H1 (cell line): ENCODE measurements at regions of chr6 and their contacts with region 1.

Region 1: GRCh38 chr6:134097114-134097707 is 44.8 kb upstream of the SLC2A12 start:
- DNase-seq: peak in 1 of 2 experiments; percentile 71
- H3K4me3 ChIP-seq: no peak overlapping the region
- H3K27ac ChIP-seq: no peak overlapping the region
- H3K4me1 ChIP-seq: no peaks in the 10 kb centered on the region
- H3K27me3 ChIP-seq: peaks cover 0 to under 1% (median 0%) of the 10 kb centered on the region in 4 experiments; a peak in 1 of 7 replicates
- CTCF ChIP-seq: peak in 2 of 3 experiments; percentile 63 to 69; a peak in 3 of 4 replicates
- EP300 ChIP-seq: no peak
- POLR2A ChIP-seq: no peak
- RAD21 ChIP-seq: peak; percentile 96 to 98

Region 2: DNA sequence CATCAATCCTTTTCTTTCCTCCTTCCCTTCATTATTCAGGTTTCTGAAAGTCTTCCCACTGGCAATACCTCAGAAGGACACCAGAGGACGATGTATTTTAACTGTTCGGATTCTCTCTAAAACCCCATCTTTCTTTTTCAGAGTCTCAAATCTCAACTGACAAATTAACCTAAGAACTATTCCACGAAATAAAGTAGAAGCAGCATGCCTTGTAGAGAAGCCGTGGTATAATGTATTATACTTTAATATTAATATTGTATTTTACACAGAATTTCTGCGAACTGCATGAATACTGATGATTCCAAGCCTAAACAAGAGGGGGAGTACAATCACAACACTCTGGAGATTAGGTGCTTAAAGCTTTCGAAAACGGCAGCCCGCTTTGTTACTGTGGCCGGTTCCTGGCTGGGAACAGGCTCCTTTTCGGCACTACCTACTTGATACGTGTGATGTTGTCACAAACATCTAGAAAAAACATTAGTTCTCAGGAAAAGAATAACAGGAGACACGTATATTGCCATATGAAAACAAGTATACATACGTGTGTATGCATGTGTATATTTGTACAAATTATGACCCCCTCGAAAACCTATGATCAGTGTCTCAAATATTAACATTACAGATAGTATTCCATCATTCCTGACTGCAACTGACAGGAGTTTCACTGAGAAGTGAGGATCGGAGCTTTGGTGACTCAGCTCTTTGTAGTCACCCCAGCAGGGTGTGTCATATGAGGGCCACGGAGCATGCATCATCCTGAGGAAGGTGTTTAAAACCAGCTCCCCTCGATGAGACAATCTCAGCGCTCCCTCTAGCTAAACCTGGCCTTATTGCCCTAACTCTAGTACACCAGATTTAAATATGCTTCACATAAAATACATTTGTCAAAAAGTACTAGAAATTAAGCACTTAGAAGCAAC is 528.0 kb before region 1 on chr6:
- CTCF ChIA-PET with region 1: interaction called, 16 read pairs
- POLR2A ChIA-PET with region 1: no interaction called
- DNase-seq: no peak
- H3K4me3 ChIP-seq: peak overlapping the region; percentile 3 to 56 (median 24); a peak in 6 of 8 replicates
- H3K27ac ChIP-seq: no peak overlapping the region
- H3K4me1 ChIP-seq: no peaks in the 10 kb centered on the region
- H3K27me3 ChIP-seq: no peaks in the 10 kb centered on the region
- CTCF ChIP-seq: peak in 2 of 3 experiments; percentile 58 to 66; a peak in 2 of 4 replicates
- EP300 ChIP-seq: no peak
- POLR2A ChIP-seq: no peak
- RAD21 ChIP-seq: peak; percentile 76 to 78

Region 3: GRCh38 chr6:133945158-133945557 is 152.1 kb before region 1 on chr6:
- CTCF ChIA-PET with region 1: interaction called, 12 read pairs
- POLR2A ChIA-PET with region 1: no interaction called
- DNase-seq: no peak
- H3K4me3 ChIP-seq: no peak overlapping the region
- H3K27ac ChIP-seq: no peak overlapping the region
- H3K4me1 ChIP-seq: no peaks in the 10 kb centered on the region; a peak in 1 of 7 replicates
- H3K27me3 ChIP-seq: no peaks in the 10 kb centered on the region
- CTCF ChIP-seq: peak in 2 of 3 experiments; percentile 15 to 23; a peak in 2 of 4 replicates
- EP300 ChIP-seq: no peak
- POLR2A ChIP-seq: no peak
- RAD21 ChIP-seq: no peak

Region 4: DNA sequence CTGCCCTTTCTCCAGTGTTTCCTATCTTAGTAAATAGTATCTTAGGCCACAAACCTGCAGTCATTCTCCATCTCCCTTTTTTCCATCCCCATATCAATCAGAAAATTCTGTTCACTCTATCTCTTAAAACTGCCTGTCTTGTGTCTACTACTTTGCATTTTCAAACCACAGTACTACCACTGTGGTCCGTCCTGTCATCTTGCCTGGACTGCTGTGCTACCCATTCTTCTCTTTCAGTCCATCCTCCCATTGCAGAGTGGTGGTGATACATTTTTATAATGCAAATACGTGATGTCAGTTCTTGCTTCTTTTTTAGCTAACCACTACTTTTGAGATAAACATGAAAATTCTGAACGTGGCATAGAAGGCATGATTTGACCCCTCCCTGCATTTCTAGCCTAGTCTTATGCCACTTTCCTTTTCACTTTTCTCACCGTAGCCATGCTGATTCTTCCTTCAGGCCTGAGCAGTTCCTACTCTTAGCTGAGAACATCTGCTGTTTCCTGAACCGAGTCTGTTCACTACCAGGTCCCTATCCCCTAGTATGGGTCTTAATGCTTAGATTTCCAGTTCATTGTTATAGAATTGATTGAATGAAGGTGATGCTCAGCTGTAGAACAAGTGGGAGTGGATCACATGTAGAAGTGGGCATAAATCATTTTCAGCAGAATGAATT is 130.4 kb before region 1 on chr6:
- CTCF ChIA-PET with region 1: interaction called, 20 read pairs
- POLR2A ChIA-PET with region 1: no interaction called
- DNase-seq: no peak
- H3K4me3 ChIP-seq: no peak overlapping the region
- H3K27ac ChIP-seq: no peak overlapping the region
- H3K4me1 ChIP-seq: peaks cover 0 to 3% (median 1%) of the 10 kb centered on the region in 4 experiments; a peak in 2 of 7 replicates
- H3K27me3 ChIP-seq: no peaks in the 10 kb centered on the region
- CTCF ChIP-seq: no peak
- EP300 ChIP-seq: no peak
- POLR2A ChIP-seq: no peak
- RAD21 ChIP-seq: no peak

Region 5: DNA sequence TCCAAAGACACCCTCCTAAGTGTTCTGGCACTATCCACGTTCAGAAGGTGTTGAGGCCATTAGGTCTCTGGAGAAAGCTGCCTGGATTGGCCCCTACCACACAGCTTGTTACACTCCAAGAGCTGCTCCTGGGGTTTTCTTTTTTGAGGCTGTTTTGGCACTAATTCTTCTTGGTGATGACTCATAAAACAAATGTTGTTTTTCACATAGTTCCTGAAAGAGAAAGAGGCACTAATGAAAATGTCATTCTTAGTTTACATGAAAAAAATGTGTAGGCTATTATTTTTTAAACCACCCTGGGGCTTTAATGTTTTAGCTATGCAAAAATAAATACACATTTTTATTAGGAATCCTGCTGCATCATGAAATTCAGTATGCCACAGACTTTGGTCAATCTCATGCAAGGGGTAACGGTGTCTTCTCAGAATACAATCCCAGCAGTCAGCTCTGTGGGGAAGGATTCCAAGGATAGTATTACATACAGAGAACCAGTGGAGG is 106.1 kb before region 1 on chr6:
- CTCF ChIA-PET with region 1: interaction called, 14 read pairs
- POLR2A ChIA-PET with region 1: no interaction called
- DNase-seq: no peak
- H3K4me3 ChIP-seq: no peak overlapping the region
- H3K27ac ChIP-seq: no peak overlapping the region
- H3K4me1 ChIP-seq: peaks cover 0 to 6% (median 3%) of the 10 kb centered on the region in 4 experiments; a peak in 2 of 7 replicates
- H3K27me3 ChIP-seq: no peaks in the 10 kb centered on the region
- CTCF ChIP-seq: no peak
- EP300 ChIP-seq: no peak
- POLR2A ChIP-seq: no peak
- RAD21 ChIP-seq: no peak

Region 6: DNA sequence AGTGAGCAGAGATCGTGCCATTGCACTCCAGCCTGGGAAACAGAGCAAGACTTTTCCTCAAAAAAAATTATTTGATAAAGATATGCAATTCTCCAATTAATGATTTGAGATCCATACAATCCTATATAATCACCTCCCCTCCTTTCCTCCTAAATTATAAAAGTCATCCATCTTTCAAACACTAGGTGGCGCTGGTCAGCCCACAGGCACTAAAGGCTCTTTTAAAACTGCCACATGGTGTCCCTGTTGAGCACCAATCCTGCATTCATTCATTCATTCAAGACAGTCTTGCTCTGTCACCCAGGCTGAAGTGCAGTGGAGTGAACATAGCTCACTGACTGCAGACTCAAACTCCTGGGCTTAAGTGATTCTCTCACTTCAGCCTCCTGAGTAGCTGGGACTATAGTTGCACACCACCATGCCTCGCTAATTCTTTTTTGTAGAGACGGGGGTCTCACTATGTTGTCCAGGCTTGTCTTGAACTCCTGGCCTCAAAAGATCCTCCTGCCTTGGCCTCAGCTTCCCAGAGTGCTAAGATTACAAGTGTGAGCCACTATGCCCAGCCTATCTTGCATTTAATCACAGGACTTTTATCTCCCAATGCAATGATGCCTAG is 14.0 kb after region 1 on chr6:
- CTCF ChIA-PET with region 1: interaction called, 55 read pairs
- POLR2A ChIA-PET with region 1: no interaction called
- DNase-seq: no peak
- H3K4me3 ChIP-seq: no peak overlapping the region
- H3K27ac ChIP-seq: no peak overlapping the region
- H3K4me1 ChIP-seq: no peaks in the 10 kb centered on the region
- H3K27me3 ChIP-seq: no peaks in the 10 kb centered on the region
- CTCF ChIP-seq: peak; percentile 59 to 100 (median 96)
- EP300 ChIP-seq: no peak
- POLR2A ChIP-seq: no peak
- RAD21 ChIP-seq: peak; percentile 60 to 69

Region 7: GRCh38 chr6:135212020-135212806 is 1115.0 kb after region 1 on chr6:
- CTCF ChIA-PET with region 1: no interaction called
- POLR2A ChIA-PET with region 1: no interaction called
- DNase-seq: no peak
- H3K4me3 ChIP-seq: no peak overlapping the region
- H3K27ac ChIP-seq: no peak overlapping the region
- H3K4me1 ChIP-seq: peaks cover 0 to 6% (median under 1%) of the 10 kb centered on the region in 4 experiments; a peak in 2 of 7 replicates
- H3K27me3 ChIP-seq: no peaks in the 10 kb centered on the region
- CTCF ChIP-seq: no peak
- EP300 ChIP-seq: no peak
- POLR2A ChIP-seq: no peak
- RAD21 ChIP-seq: no peak